CD4-positive, alpha-beta T cell (primary cell): ENCODE measurements at regions of chr16 and their contacts with region 1.

Region 1: GRCh38 chr16:19717771-19718602 is at the starts of genes IQCK and KNOP1:
- DNase-seq: peak; percentile 74 to 98 (median 84)
- ATAC-seq: peak; percentile 93
- H3K4me3 ChIP-seq: peak within 1 kb of the TSS; percentile 73
- H3K4me3 Mint-ChIP-seq: peak within 1 kb of the TSS; percentile 93
- H3K27ac ChIP-seq: peak within 1 kb of the TSS in 1 of 2 donors; percentile 30
- H3K27ac Mint-ChIP-seq: peak within 1 kb of the TSS; percentile 33
- H3K4me1 ChIP-seq: peaks cover 23% of the 10 kb centered on the region
- H3K4me1 Mint-ChIP-seq: peaks cover 40% of the 10 kb centered on the region
- H3K27me3 ChIP-seq: no peaks in the 10 kb centered on the region
- H3K27me3 Mint-ChIP-seq: no peaks in the 10 kb centered on the region
- CTCF ChIP-seq: no peak
- total RNA-seq, gene IQCK: 1.6 to 1.7 TPM
- total RNA-seq, gene KNOP1: 3.5 to 4.1 TPM

Region 2: GRCh38 chr16:19696328-19696727 is 21.7 kb before region 1 on chr16:
- CTCF ChIA-PET with region 1: interaction called, 3 read pairs
- POLR2A ChIA-PET with region 1: interaction called, 22 read pairs
- intact Hi-C with region 1: no loop called
- DNase-seq: peak; percentile 20 to 87 (median 66)
- ATAC-seq: peak; percentile 68
- H3K4me3 ChIP-seq: no peak overlapping the region
- H3K4me3 Mint-ChIP-seq: peak overlapping the region; percentile 62
- H3K27ac ChIP-seq: peak overlapping the region; percentile 60 to 68
- H3K27ac Mint-ChIP-seq: peak overlapping the region; percentile 94
- H3K4me1 ChIP-seq: peaks cover 53% of the 10 kb centered on the region
- H3K4me1 Mint-ChIP-seq: peaks cover 69% of the 10 kb centered on the region
- H3K27me3 ChIP-seq: no peaks in the 10 kb centered on the region
- H3K27me3 Mint-ChIP-seq: no peaks in the 10 kb centered on the region
- CTCF ChIP-seq: no peak

Region 3: GRCh38 chr16:20735490-20735889 is 1017.5 kb after region 1 on chr16:
- CTCF ChIA-PET with region 1: no interaction called
- POLR2A ChIA-PET with region 1: no interaction called
- intact Hi-C with region 1: loop called in 1 of 2 experiments (anchors 10 kb)
- DNase-seq: no peak
- ATAC-seq: no peak
- H3K4me3 ChIP-seq: no peak overlapping the region
- H3K4me3 Mint-ChIP-seq: no peak overlapping the region
- H3K27ac ChIP-seq: no peak overlapping the region
- H3K27ac Mint-ChIP-seq: no peak overlapping the region
- H3K4me1 ChIP-seq: peaks cover 23% of the 10 kb centered on the region
- H3K4me1 Mint-ChIP-seq: peaks cover 26% of the 10 kb centered on the region
- H3K27me3 ChIP-seq: no peaks in the 10 kb centered on the region
- H3K27me3 Mint-ChIP-seq: no peaks in the 10 kb centered on the region
- CTCF ChIP-seq: no peak